CD4-positive, alpha-beta memory T cell (primary cell): ENCODE measurements at regions of chr9 and their contacts with region 1.

Region 1: GRCh38 chr9:131747356-131747755 is 7.5 kb upstream of the RAPGEF1 start:
- DNase-seq: peak in 4 of 5 donors; percentile 52 to 57 (median 56)
- H3K4me3 ChIP-seq: no peak overlapping the region
- H3K4me3 Mint-ChIP-seq: no peak overlapping the region
- H3K27ac ChIP-seq: no peak overlapping the region
- H3K27ac Mint-ChIP-seq: peak overlapping the region in 5 of 7 donors; percentile 7 to 65 (median 46)
- H3K4me1 ChIP-seq: peaks cover 29% of the 10 kb centered on the region
- H3K4me1 Mint-ChIP-seq: peaks cover 27 to 36% (median 29%) of the 10 kb centered on the region in 4 donors
- H3K27me3 ChIP-seq: no peaks in the 10 kb centered on the region
- H3K27me3 Mint-ChIP-seq: no peaks in the 10 kb centered on the region

Region 2: GRCh38 chr9:131349881-131350563 is 397.3 kb before region 1 on chr9:
- CTCF ChIA-PET with region 1: interaction called, 11 read pairs
- POLR2A ChIA-PET with region 1: interaction called, 5 read pairs
- intact Hi-C with region 1: no loop called
- DNase-seq: peak; percentile 79 to 82 (median 81)
- H3K4me3 ChIP-seq: no peak overlapping the region
- H3K4me3 Mint-ChIP-seq: peak overlapping the region in 4 of 8 donors; percentile 36 to 63 (median 50)
- H3K27ac ChIP-seq: no peak overlapping the region
- H3K27ac Mint-ChIP-seq: peak overlapping the region in 3 of 7 donors; percentile 30 to 91 (median 42)
- H3K4me1 ChIP-seq: peaks cover 9% of the 10 kb centered on the region
- H3K4me1 Mint-ChIP-seq: peaks cover 0 to 12% (median 6%) of the 10 kb centered on the region in 4 donors
- H3K27me3 ChIP-seq: no peaks in the 10 kb centered on the region
- H3K27me3 Mint-ChIP-seq: peaks cover 0 to 4% of the 10 kb centered on the region in 2 donors

Region 3: DNA sequence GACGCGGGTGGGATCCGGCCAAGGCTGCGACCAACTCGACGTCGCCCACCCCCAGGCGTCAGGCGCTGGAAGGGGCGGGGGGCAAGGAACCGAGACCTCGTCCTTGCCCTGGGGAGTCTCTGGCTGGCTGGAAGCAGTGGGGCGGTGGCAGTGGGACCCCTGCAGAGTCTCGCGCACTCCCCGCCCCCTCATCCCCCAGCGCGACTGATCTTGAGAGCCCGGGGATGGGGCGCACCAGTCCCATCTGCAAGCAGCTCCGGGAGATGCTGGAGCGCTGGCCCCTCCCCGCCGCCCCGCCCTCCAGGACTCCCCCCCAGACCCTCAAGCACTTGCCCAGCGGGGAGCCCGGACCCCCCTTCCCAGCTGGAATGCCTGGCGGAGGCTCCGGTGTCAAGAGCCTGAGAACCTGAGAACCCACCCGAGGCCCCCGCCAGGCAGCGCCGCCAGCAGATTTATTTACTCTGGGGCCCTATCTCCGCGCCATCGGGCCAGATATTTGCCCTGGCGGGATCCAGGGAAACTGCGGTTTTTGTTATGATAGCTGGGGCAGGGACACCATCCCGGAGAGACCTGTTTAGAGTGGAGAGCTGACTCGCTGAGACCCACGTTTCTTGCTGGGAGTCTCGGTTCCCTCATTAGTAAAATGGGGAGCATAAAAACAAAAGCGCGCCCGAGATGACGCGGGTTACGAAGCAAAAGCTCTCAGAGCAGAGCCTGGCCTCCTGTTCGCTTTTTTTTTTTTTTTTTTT is 200.8 kb before region 1 on chr9:
- CTCF ChIA-PET with region 1: no interaction called
- POLR2A ChIA-PET with region 1: no interaction called
- intact Hi-C with region 1: no loop called
- DNase-seq: no peak
- H3K4me3 ChIP-seq: peak overlapping the region in 1 of 2 donors; percentile 32
- H3K4me3 Mint-ChIP-seq: peak overlapping the region; percentile 80 to 91 (median 84)
- H3K27ac ChIP-seq: no peak overlapping the region
- H3K27ac Mint-ChIP-seq: peak overlapping the region in 4 of 7 donors; percentile 22 to 76 (median 44)
- H3K4me1 ChIP-seq: peaks cover 6% of the 10 kb centered on the region
- H3K4me1 Mint-ChIP-seq: peaks cover 1 to 27% (median 16%) of the 10 kb centered on the region in 4 donors
- H3K27me3 ChIP-seq: peaks cover 4% of the 10 kb centered on the region
- H3K27me3 Mint-ChIP-seq: peaks cover 31 to 40% of the 10 kb centered on the region in 2 donors

Region 4: DNA sequence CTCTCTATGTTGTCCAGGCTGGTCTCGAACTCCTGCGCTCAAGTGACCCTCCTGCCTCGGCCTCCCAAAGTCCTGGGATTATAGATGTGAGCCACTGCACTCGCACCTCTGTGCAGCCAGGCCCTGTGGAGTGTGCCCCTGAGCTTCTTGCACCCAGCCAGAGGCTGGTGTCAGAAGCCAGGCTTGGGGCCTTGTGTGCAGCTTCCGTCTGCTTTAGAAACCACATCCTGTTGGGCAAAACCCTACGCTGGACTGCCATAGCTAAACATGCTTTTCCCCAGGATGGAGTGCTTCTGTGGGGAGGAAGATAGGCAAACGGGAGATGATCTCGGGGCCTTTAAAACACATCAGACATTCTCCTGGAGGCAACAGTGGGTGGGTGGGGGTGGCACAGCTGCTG is 162.0 kb before region 1 on chr9:
- CTCF ChIA-PET with region 1: interaction called, 186 read pairs
- POLR2A ChIA-PET with region 1: interaction called, 18 read pairs
- intact Hi-C with region 1: no loop called
- DNase-seq: peak; percentile 56 to 77 (median 60)
- H3K4me3 ChIP-seq: no peak overlapping the region
- H3K4me3 Mint-ChIP-seq: peak overlapping the region; percentile 67 to 87 (median 78)
- H3K27ac ChIP-seq: peak overlapping the region; percentile 6
- H3K27ac Mint-ChIP-seq: peak overlapping the region; percentile 85 to 97 (median 92)
- H3K4me1 ChIP-seq: peaks cover 35% of the 10 kb centered on the region
- H3K4me1 Mint-ChIP-seq: peaks cover 24 to 57% (median 32%) of the 10 kb centered on the region in 4 donors
- H3K27me3 ChIP-seq: no peaks in the 10 kb centered on the region
- H3K27me3 Mint-ChIP-seq: no peaks in the 10 kb centered on the region

Region 5: DNA sequence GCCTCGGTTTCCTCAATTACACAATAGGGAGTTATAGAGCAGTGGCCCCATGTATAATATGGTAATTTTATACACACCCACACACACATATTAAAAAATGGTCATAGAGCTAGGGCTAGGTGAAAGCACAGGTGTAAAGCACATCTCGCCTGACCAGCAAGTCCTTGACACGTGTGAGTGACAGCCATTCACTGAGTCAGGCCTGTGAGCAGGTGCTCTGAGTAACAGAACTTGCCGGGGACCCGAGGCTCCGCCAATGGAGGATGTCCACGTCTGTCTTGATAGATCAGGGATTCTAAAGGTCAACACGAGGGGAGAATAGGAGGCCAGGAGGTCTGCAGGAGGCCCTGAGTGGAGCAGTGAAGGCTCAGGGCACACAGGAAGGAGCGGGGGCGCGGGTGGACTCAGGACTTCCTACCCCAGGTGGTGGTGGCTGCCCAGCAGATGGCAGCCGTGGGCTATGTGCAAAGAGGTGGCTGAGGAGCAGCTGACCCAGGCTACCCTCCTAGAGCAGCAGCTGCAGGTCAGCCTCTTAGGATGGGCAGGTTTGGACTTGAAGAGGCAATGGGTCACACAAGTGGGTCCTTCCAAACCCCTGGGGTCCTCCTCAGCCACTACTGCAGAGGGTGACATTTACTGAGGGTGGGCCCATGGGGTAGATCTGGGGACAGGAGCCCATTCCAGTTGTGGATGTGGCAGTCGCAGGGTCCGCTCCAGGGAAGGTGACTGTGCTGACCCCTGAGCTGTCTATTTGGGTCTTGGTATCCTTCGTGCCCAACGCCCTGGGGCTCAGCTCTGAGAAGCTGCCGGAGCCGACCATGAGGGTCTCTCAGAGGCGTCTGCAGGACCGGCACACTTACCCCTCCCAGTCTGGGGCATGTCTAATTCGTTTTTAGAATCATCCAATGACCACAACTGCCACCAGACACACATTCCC is 156.2 kb before region 1 on chr9:
- CTCF ChIA-PET with region 1: interaction called, 186 read pairs
- POLR2A ChIA-PET with region 1: interaction called, 7 read pairs
- intact Hi-C with region 1: loop called (anchors 1 kb)
- DNase-seq: peak; percentile 68 to 74 (median 73)
- H3K4me3 ChIP-seq: no peak overlapping the region
- H3K4me3 Mint-ChIP-seq: peak overlapping the region in 6 of 8 donors; percentile 20 to 73 (median 46)
- H3K27ac ChIP-seq: no peak overlapping the region
- H3K27ac Mint-ChIP-seq: peak overlapping the region; percentile 77 to 94 (median 85)
- H3K4me1 ChIP-seq: peaks cover 25% of the 10 kb centered on the region
- H3K4me1 Mint-ChIP-seq: peaks cover 22 to 48% (median 34%) of the 10 kb centered on the region in 4 donors
- H3K27me3 ChIP-seq: no peaks in the 10 kb centered on the region
- H3K27me3 Mint-ChIP-seq: no peaks in the 10 kb centered on the region

Region 6: GRCh38 chr9:131709771-131710454 is 37.4 kb before region 1 on chr9:
- CTCF ChIA-PET with region 1: no interaction called
- POLR2A ChIA-PET with region 1: interaction called, 11 read pairs
- intact Hi-C with region 1: no loop called
- DNase-seq: peak; percentile 77 to 92 (median 84)
- H3K4me3 ChIP-seq: peak overlapping the region in 1 of 2 donors; percentile 8
- H3K4me3 Mint-ChIP-seq: peak overlapping the region; percentile 73 to 82 (median 78)
- H3K27ac ChIP-seq: peak overlapping the region; percentile 81
- H3K27ac Mint-ChIP-seq: peak overlapping the region; percentile 97 to 100 (median 99)
- H3K4me1 ChIP-seq: peaks cover 84% of the 10 kb centered on the region
- H3K4me1 Mint-ChIP-seq: peaks cover 53 to 94% (median 77%) of the 10 kb centered on the region in 4 donors
- H3K27me3 ChIP-seq: no peaks in the 10 kb centered on the region
- H3K27me3 Mint-ChIP-seq: no peaks in the 10 kb centered on the region

Region 7: DNA sequence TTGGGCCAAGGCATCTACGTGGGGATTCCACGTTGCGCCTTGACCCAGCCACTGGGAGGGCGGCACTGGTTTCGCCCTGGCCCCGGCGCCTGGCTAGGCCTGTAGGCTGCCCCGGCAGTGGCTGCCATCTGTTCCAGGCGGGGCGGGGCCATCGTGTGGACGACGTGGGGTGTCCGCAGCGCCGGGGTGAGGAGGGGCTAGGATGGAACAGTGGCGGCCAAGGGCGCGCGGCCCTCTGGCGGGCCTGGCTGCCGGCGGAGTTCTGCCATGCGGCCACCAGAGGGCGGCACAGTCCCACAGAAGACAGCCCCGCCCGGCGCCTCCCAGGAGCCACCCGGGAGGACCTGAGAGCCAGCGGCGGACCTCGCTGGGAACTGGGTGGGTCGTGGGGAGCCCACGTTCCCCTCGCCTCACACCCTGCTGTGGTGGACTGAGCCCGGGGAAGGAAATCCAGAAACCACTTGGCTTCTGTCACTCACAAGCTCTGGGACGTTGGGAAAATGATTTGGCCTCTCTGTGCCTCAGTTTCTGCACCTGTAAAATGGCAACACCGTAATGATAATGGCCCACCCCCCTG is 15.1 kb after region 1 on chr9:
- CTCF ChIA-PET with region 1: interaction called, 13 read pairs
- POLR2A ChIA-PET with region 1: no interaction called
- intact Hi-C with region 1: no loop called
- DNase-seq: peak; percentile 64 to 74 (median 67)
- H3K4me3 ChIP-seq: no peak overlapping the region
- H3K4me3 Mint-ChIP-seq: no peak overlapping the region
- H3K27ac ChIP-seq: no peak overlapping the region
- H3K27ac Mint-ChIP-seq: peak overlapping the region in 2 of 7 donors; percentile 19 to 35
- H3K4me1 ChIP-seq: peaks cover 7% of the 10 kb centered on the region
- H3K4me1 Mint-ChIP-seq: no peaks in the 10 kb centered on the region
- H3K27me3 ChIP-seq: no peaks in the 10 kb centered on the region
- H3K27me3 Mint-ChIP-seq: peaks cover 2 to 4% of the 10 kb centered on the region in 2 donors

Region 8: DNA sequence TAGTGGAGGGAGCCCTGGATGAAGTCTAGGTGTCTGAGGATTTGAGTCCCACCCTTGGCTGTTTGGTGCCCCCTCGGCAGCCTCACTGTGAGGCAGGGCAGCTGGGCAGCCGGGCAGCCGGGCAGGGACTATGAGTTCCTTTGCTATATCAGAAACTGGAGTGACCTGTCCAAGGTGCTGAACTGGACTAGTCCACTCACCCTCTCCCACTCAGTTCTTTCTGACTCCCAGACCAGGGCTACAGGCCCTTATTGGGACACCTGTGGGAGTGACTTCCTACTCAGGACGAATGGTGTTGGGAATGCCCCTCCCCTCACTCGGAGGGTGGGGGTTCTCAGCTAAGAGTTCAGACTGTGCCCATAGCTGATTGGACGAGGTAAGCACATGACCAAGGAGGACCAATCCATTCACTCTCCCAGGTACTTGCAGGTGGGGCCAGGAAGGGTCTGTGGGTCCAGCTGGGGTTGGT is 26.6 kb after region 1 on chr9:
- CTCF ChIA-PET with region 1: no interaction called
- POLR2A ChIA-PET with region 1: no interaction called
- intact Hi-C with region 1: no loop called
- DNase-seq: peak in 3 of 5 donors; percentile 10 to 22 (median 15)
- H3K4me3 ChIP-seq: no peak overlapping the region
- H3K4me3 Mint-ChIP-seq: no peak overlapping the region
- H3K27ac ChIP-seq: no peak overlapping the region
- H3K27ac Mint-ChIP-seq: no peak overlapping the region
- H3K4me1 ChIP-seq: no peaks in the 10 kb centered on the region
- H3K4me1 Mint-ChIP-seq: no peaks in the 10 kb centered on the region
- H3K27me3 ChIP-seq: no peaks in the 10 kb centered on the region
- H3K27me3 Mint-ChIP-seq: peaks cover 17% of the 10 kb centered on the region in 2 donors

Region 9: DNA sequence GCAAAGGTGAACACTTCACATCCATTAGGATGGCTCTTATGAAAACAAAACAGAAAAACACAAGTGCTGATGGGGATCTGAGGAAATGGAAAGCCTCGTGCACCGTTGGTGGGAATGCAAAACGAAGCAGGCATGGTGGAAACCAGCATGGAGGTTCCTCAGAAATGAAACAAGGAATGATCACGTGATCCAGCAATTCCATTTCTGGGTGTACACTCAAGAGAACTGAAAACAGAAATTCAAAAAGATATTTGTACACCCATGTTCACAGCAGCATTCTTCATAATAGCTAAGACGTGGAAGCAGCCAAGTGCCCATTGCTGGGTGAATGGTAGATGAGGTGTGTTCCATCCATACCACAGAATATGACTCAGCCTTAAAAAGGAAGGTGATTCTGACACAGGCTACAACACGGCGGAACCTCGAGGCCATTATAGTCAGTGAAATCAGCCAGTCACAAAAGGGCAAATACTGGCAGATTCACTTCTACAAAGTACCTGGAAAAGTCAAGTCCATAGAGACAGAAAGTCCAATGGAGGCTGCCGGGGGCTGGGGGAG is 79.7 kb after region 1 on chr9:
- CTCF ChIA-PET with region 1: no interaction called
- POLR2A ChIA-PET with region 1: no interaction called
- intact Hi-C with region 1: no loop called
- DNase-seq: no peak
- H3K4me3 ChIP-seq: no peak overlapping the region
- H3K4me3 Mint-ChIP-seq: no peak overlapping the region
- H3K27ac ChIP-seq: no peak overlapping the region
- H3K27ac Mint-ChIP-seq: no peak overlapping the region
- H3K4me1 ChIP-seq: no peaks in the 10 kb centered on the region
- H3K4me1 Mint-ChIP-seq: peaks cover 0 to 2% (median under 1%) of the 10 kb centered on the region in 4 donors
- H3K27me3 ChIP-seq: no peaks in the 10 kb centered on the region
- H3K27me3 Mint-ChIP-seq: peaks cover 19 to 20% of the 10 kb centered on the region in 2 donors